Gastrocnemius medialis (tissue), 4 donors: ENCODE measurements at regions of chr18 and their contacts with region 1.

Region 1: GRCh38 chr18:6714010-6714409 is 15.5 kb upstream of the ARHGAP28 start:
- DNase-seq: no peak
- ATAC-seq: no peak
- H3K4me3 ChIP-seq: no peak overlapping the region
- H3K27ac ChIP-seq: no peak overlapping the region
- H3K4me1 ChIP-seq: no peaks in the 10 kb centered on the region
- H3K27me3 ChIP-seq: no peaks in the 10 kb centered on the region
- CTCF ChIP-seq: no peak
- POLR2A ChIP-seq: no peak

Region 2: DNA sequence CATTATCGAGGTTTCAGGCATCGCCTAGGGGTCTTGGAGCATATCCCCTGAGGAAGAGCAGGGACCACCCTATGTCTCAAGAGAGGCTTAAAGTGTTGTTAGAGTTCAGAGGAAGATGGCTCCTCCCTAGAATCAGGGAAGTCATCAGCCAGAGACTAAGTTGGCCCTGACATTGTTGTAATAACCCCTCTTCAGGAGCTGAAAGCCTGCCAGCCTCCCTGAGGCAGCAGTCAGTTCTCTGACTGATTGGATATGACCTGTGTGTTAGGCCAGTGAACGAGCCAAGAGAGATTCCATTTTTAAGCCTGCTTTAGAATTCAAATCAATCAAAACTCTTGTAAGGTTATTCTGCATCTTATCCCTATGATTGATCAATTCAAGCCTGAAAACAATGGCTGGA is 50.4 kb after region 1 on chr18:
- in situ Hi-C with region 1: no loop called
- intact Hi-C with region 1: no loop called
- DNase-seq: no peak
- ATAC-seq: no peak
- H3K4me3 ChIP-seq: no peak overlapping the region
- H3K27ac ChIP-seq: no peak overlapping the region
- H3K4me1 ChIP-seq: no peaks in the 10 kb centered on the region
- H3K27me3 ChIP-seq: no peaks in the 10 kb centered on the region
- CTCF ChIP-seq: no peak
- POLR2A ChIP-seq: no peak

Region 3: GRCh38 chr18:6807515-6808257 is 93.7 kb after region 1 on chr18:
- in situ Hi-C with region 1: loop called in 1 of 4 experiments (anchors 25 kb)
- intact Hi-C with region 1: no loop called
- DNase-seq: no peak
- ATAC-seq: peak in 1 of 2 donors; percentile 68
- H3K4me3 ChIP-seq: peak overlapping the region in 3 of 4 donors; percentile 6 to 35 (median 9)
- H3K27ac ChIP-seq: peak overlapping the region in 1 of 4 donors; percentile 30
- H3K4me1 ChIP-seq: peaks cover 0 to 5% of the 10 kb centered on the region in 2 donors
- H3K27me3 ChIP-seq: no peaks in the 10 kb centered on the region
- CTCF ChIP-seq: no peak
- POLR2A ChIP-seq: no peak